OCI-LY7 (cell line): ENCODE measurements at regions of chr1 and their contacts with region 1.

Region 1: GRCh38 chr1:192747942-192748341 is 60.9 kb upstream of the RGS2 start:
- DNase-seq: no peak
- H3K4me3 ChIP-seq: no peak overlapping the region
- H3K27ac ChIP-seq: no peak overlapping the region
- H3K4me1 ChIP-seq: no peaks in the 10 kb centered on the region
- CTCF ChIP-seq: no peak

Region 2: GRCh38 chr1:192118881-192119405 is 629.0 kb before region 1 on chr1:
- CTCF ChIA-PET with region 1: no interaction called
- POLR2A ChIA-PET with region 1: no interaction called
- intact Hi-C with region 1: no loop called
- DNase-seq: no peak
- H3K4me3 ChIP-seq: no peak overlapping the region
- H3K27ac ChIP-seq: no peak overlapping the region
- H3K4me1 ChIP-seq: no peaks in the 10 kb centered on the region
- CTCF ChIP-seq: no peak

Region 3: GRCh38 chr1:192730198-192730597 is 17.7 kb before region 1 on chr1:
- CTCF ChIA-PET with region 1: no interaction called
- POLR2A ChIA-PET with region 1: interaction called, 10 read pairs
- intact Hi-C with region 1: no loop called
- DNase-seq: no peak
- H3K4me3 ChIP-seq: no peak overlapping the region
- H3K27ac ChIP-seq: no peak overlapping the region
- H3K4me1 ChIP-seq: no peaks in the 10 kb centered on the region
- CTCF ChIP-seq: no peak

Region 4: DNA sequence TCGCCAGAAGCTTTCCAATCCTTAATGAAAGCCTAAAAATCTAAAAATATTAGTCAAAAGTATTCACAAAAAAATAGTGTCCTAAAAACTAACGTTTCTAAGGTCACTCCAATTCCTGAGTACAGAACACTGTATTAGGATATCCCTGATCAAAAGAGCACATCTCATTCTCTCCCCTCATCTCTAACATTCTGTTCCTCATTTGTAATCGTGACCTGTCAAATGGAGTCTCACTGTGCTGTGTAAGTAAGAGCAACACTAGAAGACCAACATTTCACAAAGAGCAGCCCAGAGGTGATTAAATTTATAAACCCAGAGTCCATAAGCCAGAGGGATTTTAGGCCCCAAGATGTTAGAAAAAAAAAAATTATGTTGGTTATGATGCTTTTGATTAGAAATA is 87.2 kb after region 1 on chr1:
- CTCF ChIA-PET with region 1: no interaction called
- POLR2A ChIA-PET with region 1: no interaction called
- intact Hi-C with region 1: no loop called
- DNase-seq: no peak
- H3K4me3 ChIP-seq: no peak overlapping the region
- H3K27ac ChIP-seq: no peak overlapping the region
- H3K4me1 ChIP-seq: no peaks in the 10 kb centered on the region
- CTCF ChIP-seq: no peak

Region 5: DNA sequence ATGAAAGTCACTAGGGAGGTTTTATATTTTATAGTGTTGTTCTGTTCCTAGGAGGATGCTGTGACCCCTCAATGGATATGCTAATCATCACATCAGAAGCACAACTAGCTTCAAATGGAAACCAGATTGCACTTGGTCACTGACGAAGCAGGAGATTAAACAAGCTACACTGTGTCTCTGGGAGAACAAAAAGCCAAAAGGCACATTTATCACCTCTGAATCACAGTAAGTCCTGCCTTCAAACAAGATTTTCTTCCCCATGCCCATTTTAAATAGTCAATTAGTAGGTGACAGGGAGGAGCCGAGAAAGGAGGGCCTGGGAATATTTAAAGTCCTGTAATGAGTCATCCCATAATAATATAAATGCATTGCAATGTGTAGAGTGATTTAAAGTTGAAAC is 99.0 kb after region 1 on chr1:
- CTCF ChIA-PET with region 1: no interaction called
- POLR2A ChIA-PET with region 1: interaction called, 11 read pairs
- intact Hi-C with region 1: no loop called
- DNase-seq: no peak
- H3K4me3 ChIP-seq: no peak overlapping the region
- H3K27ac ChIP-seq: no peak overlapping the region
- H3K4me1 ChIP-seq: no peaks in the 10 kb centered on the region
- CTCF ChIP-seq: no peak